RWPE1 (cell line): ENCODE measurements at regions of chr14 and their contacts with region 1.

Region 1: GRCh38 chr14:81269100-81269978 is 48.6 kb upstream of the GTF2A1 start:
- DNase-seq: peak; percentile 84
- H3K27ac ChIP-seq: no peak overlapping the region
- CTCF ChIP-seq: peak; percentile 83

Region 2: DNA sequence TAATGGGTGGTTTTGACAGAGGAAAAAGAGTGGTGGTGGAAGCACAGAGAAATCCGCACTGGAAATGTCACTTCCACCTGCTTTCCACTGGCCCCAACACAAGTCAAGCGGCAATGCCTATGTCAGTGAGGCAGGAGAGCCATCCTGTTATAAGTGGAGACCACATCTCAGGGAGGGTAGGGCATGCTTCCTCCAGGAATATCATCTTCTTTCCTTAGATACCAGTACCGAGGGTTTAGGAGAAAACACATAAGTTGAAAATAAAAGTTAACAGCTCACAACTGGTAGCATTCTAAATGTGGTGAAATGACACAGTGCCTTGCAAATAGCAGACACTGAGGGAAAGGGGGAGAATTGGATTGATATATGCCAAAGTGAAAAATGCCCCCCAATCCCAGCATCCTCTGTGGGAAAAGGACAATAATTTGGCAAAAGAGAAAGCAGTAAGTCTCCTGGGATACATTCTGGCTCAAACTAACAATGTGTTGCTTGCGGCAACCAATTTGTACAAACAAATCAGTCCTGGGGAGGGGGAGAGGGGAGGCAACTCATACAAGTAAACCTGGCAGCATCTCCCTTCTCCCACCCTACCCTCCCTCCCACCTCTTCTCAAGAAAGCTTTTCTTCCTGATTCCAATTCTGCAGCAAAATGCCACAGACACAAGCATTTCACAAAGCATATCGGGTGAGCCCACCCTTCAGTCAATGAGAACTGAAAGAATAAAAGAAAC is 73.7 kb after region 1 on chr14:
- CTCF ChIA-PET with region 1: no interaction called
- POLR2A ChIA-PET with region 1: no interaction called
- DNase-seq: no peak
- H3K27ac ChIP-seq: peak overlapping the region; percentile 30; the same call in 1 of the 2 replicates
- CTCF ChIP-seq: no peak

Region 3: GRCh38 chr14:81453166-81453766 is 183.9 kb after region 1 on chr14:
- CTCF ChIA-PET with region 1: interaction called, 41 read pairs
- POLR2A ChIA-PET with region 1: no interaction called
- DNase-seq: peak; percentile 37
- H3K27ac ChIP-seq: no peak overlapping the region
- CTCF ChIP-seq: peak; percentile 88

Region 4: DNA sequence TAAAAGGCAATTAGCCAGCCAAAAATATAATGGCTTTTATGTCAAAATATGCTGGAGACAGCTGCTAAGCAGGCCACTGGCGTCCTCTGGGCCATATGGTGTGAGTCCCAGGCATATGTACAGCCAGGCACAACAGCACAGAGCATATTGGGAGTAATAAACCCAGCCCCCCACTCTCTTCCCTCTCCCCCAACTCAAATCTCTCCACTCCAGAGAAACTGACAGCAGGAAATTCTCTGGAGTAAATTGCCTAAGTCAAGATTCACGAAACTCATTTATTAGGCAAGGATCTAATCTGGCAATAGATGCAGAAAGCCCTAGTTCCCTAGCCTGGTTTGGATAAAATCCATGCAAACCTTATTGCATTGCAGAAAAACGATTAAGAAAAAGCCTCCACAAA is 412.2 kb after region 1 on chr14:
- CTCF ChIA-PET with region 1: no interaction called
- POLR2A ChIA-PET with region 1: no interaction called
- DNase-seq: no peak
- H3K27ac ChIP-seq: no peak overlapping the region
- CTCF ChIP-seq: no peak